PC-9 (cell line): ENCODE measurements at regions of chr3 and their contacts with region 1.

Region 1: GRCh38 chr3:149339931-149340309 is 6.5 kb upstream of the TM4SF18 start:
- DNase-seq: peak; percentile 93 to 98
- H3K4me3 ChIP-seq: peak overlapping the region; percentile 20; the same call in 1 of the 2 replicates
- H3K27ac ChIP-seq: peak overlapping the region; percentile 97
- H3K4me1 ChIP-seq: peaks cover 41% of the 10 kb centered on the region
- H3K27me3 ChIP-seq: no peaks in the 10 kb centered on the region
- CTCF ChIP-seq: no peak

Region 2: DNA sequence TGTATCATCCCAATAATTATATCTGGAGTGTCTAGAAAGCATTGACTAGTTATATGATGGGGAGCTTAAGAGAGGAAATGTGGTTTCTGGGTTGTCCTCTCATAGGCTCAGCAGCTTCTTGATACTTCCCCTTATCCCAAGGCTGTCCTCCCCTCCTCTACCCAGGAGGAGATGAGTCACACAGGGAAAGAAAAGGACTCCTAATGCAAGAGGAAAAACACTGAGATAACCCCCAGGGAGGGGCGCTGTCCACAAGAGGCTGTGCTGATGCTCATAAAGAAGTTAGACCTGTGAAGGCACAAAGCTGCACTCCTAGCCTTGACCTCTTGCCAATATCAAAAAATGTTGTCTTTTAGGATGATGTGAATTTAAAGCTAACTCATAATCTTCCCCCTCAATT is 377.4 kb before region 1 on chr3:
- CTCF ChIA-PET with region 1: no interaction called
- POLR2A ChIA-PET with region 1: no interaction called
- intact Hi-C with region 1: loop called (anchors 2 kb)
- DNase-seq: peak; percentile 58 to 73
- H3K4me3 ChIP-seq: no peak overlapping the region
- H3K27ac ChIP-seq: no peak overlapping the region
- H3K4me1 ChIP-seq: no peaks in the 10 kb centered on the region
- H3K27me3 ChIP-seq: no peaks in the 10 kb centered on the region
- CTCF ChIP-seq: peak; percentile 50

Region 3: GRCh38 chr3:149314807-149315578 is 24.9 kb before region 1 on chr3:
- CTCF ChIA-PET with region 1: no interaction called
- POLR2A ChIA-PET with region 1: interaction called, 7 read pairs
- intact Hi-C with region 1: loop called (anchors 2 kb)
- DNase-seq: peak; percentile 29 to 70
- H3K4me3 ChIP-seq: no peak overlapping the region
- H3K27ac ChIP-seq: peak overlapping the region; percentile 73
- H3K4me1 ChIP-seq: peaks cover 45% of the 10 kb centered on the region
- H3K27me3 ChIP-seq: no peaks in the 10 kb centered on the region
- CTCF ChIP-seq: no peak

Region 4: GRCh38 chr3:149384911-149385321 is 45.0 kb after region 1 on chr3:
- CTCF ChIA-PET with region 1: interaction called, 3 read pairs
- POLR2A ChIA-PET with region 1: interaction called, 7 read pairs
- intact Hi-C with region 1: loop called (anchors 1 kb)
- DNase-seq: peak in 1 of 2 experiments; percentile 66
- H3K4me3 ChIP-seq: no peak overlapping the region
- H3K27ac ChIP-seq: peak overlapping the region; percentile 100
- H3K4me1 ChIP-seq: peaks cover 71% of the 10 kb centered on the region
- H3K27me3 ChIP-seq: no peaks in the 10 kb centered on the region
- CTCF ChIP-seq: no peak

Region 5: DNA sequence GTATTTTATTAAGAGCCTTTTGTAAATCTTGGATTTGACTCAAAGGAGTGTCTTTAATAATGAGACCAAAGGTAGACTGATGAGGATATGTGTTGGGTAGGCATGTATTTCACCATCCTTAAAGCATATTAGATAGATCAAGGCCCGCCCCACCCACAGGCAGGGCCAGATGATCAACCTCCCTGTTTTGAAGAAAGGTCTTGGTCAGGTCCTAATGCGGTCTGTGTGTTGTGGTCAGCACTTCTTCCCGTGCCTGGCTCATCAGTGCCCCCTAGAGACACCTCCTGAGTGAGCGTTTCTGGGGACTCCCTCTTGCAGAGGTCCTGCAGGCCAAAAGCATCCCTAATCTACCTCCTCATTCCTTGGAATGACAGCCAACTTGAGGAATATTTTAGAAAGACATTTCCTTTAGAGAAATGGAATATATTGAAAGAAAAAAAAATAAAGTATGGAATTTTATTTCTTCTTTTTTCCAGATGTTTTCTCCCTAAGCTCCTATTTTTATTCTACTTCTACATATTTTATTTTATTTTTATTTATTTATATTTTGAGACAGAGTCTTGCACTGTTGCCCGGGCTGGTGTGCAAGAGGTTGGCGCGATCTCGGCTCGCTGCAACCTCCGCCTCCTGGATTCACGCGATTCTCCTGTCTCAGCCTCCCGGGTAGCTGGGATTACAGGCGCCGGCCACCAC is 140.6 kb after region 1 on chr3:
- CTCF ChIA-PET with region 1: no interaction called
- POLR2A ChIA-PET with region 1: no interaction called
- intact Hi-C with region 1: loop called (anchors 1 kb)
- DNase-seq: peak; percentile 81 to 89
- H3K4me3 ChIP-seq: no peak overlapping the region
- H3K27ac ChIP-seq: peak overlapping the region; percentile 46
- H3K4me1 ChIP-seq: peaks cover 19% of the 10 kb centered on the region
- H3K27me3 ChIP-seq: no peaks in the 10 kb centered on the region
- CTCF ChIP-seq: peak; percentile 87

Region 6: DNA sequence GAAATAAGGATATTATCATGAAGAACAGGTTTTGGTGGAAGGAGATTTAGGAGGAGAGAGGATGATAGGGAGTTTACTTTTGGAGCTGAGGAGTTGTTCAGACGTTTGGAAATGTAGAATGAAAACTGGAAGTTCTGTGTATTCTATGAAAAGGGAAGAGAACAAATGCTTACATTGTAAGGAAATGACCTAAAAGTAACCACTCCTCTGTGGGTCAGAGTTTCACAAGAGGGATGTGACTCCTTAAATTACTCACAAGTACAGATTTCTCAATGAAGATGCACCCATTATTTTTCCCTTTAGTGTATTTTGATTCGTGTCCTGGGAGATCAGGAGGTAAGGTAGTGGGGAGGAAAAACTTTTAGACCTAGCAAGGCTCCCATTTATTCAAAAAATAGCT is 477.1 kb after region 1 on chr3:
- CTCF ChIA-PET with region 1: no interaction called
- POLR2A ChIA-PET with region 1: no interaction called
- intact Hi-C with region 1: no loop called
- DNase-seq: no peak
- H3K4me3 ChIP-seq: no peak overlapping the region
- H3K27ac ChIP-seq: no peak overlapping the region
- H3K4me1 ChIP-seq: peaks cover 39% of the 10 kb centered on the region
- H3K27me3 ChIP-seq: no peaks in the 10 kb centered on the region
- CTCF ChIP-seq: no peak

Region 7: DNA sequence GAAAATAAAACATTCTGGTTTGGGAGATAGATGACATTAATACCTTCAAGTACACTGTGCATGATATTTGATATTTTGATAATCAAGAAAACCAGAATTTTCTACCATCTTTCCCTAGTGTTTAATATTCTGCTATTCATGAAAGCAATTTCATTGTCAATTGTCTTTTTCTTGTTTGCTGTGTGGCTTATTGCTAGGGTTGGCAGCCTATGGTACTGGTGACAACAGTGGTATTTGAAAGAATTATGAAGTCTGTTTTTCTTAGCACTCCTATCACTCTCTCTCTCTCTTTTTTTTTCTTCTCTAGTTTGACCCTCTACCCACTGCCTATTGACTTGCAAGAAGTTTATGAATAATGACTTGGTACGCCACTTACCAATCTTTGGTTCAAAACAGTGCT is 488.5 kb after region 1 on chr3:
- CTCF ChIA-PET with region 1: no interaction called
- POLR2A ChIA-PET with region 1: no interaction called
- intact Hi-C with region 1: no loop called
- DNase-seq: no peak
- H3K4me3 ChIP-seq: no peak overlapping the region
- H3K27ac ChIP-seq: no peak overlapping the region
- H3K4me1 ChIP-seq: no peaks in the 10 kb centered on the region
- H3K27me3 ChIP-seq: no peaks in the 10 kb centered on the region
- CTCF ChIP-seq: no peak

Region 8: GRCh38 chr3:150867434-150867833 is 1527.5 kb after region 1 on chr3:
- CTCF ChIA-PET with region 1: no interaction called
- POLR2A ChIA-PET with region 1: no interaction called
- intact Hi-C with region 1: no loop called
- DNase-seq: no peak
- H3K4me3 ChIP-seq: no peak overlapping the region
- H3K27ac ChIP-seq: no peak overlapping the region
- H3K4me1 ChIP-seq: peaks cover 5% of the 10 kb centered on the region; the same call in 1 of the 2 replicates
- H3K27me3 ChIP-seq: no peaks in the 10 kb centered on the region
- CTCF ChIP-seq: no peak